Psoas muscle (tissue), 8 donors: ENCODE measurements at regions of chr10 and their contacts with region 1.

Region 1: GRCh38 chr10:96743988-96744585 is 23.8 kb upstream of the PIK3AP1 start:
- DNase-seq: no peak
- ATAC-seq: no peak
- H3K4me3 ChIP-seq: no peak overlapping the region
- H3K27ac ChIP-seq: no peak overlapping the region
- H3K4me1 ChIP-seq: no peaks in the 10 kb centered on the region
- H3K27me3 ChIP-seq: no peaks in the 10 kb centered on the region
- CTCF ChIP-seq: peak; percentile 16

Region 2: GRCh38 chr10:95295031-95295755 is 1448.9 kb before region 1 on chr10:
- intact Hi-C with region 1: no loop called
- DNase-seq: peak; percentile 37 to 77
- ATAC-seq: peak; percentile 21 to 54 (median 36)
- H3K4me3 ChIP-seq: peak overlapping the region; percentile 60
- H3K27ac ChIP-seq: peak overlapping the region; percentile 55
- H3K4me1 ChIP-seq: peaks cover 5% of the 10 kb centered on the region
- H3K27me3 ChIP-seq: no peaks in the 10 kb centered on the region
- CTCF ChIP-seq: no peak

Region 3: GRCh38 chr10:96395931-96396877 is 347.9 kb before region 1 on chr10:
- intact Hi-C with region 1: loop called in 1 of 2 experiments (anchors 10 kb)
- DNase-seq: peak; percentile 56 to 80
- ATAC-seq: peak; percentile 75 to 94 (median 83)
- H3K4me3 ChIP-seq: no peak overlapping the region
- H3K27ac ChIP-seq: no peak overlapping the region
- H3K4me1 ChIP-seq: no peaks in the 10 kb centered on the region
- H3K27me3 ChIP-seq: peaks cover 0 to 2% (median 0%) of the 10 kb centered on the region in 3 donors
- CTCF ChIP-seq: peak; percentile 86

Region 4: GRCh38 chr10:96878057-96878456 is 134.0 kb after region 1 on chr10:
- intact Hi-C with region 1: no loop called
- DNase-seq: no peak
- ATAC-seq: no peak
- H3K4me3 ChIP-seq: no peak overlapping the region
- H3K27ac ChIP-seq: no peak overlapping the region
- H3K4me1 ChIP-seq: peaks cover 25% of the 10 kb centered on the region
- H3K27me3 ChIP-seq: no peaks in the 10 kb centered on the region
- CTCF ChIP-seq: no peak